Naive thymus-derived CD8-positive, alpha-beta T cell (primary cell): ENCODE measurements at regions of chr19 and their contacts with region 1.

Region 1: DNA sequence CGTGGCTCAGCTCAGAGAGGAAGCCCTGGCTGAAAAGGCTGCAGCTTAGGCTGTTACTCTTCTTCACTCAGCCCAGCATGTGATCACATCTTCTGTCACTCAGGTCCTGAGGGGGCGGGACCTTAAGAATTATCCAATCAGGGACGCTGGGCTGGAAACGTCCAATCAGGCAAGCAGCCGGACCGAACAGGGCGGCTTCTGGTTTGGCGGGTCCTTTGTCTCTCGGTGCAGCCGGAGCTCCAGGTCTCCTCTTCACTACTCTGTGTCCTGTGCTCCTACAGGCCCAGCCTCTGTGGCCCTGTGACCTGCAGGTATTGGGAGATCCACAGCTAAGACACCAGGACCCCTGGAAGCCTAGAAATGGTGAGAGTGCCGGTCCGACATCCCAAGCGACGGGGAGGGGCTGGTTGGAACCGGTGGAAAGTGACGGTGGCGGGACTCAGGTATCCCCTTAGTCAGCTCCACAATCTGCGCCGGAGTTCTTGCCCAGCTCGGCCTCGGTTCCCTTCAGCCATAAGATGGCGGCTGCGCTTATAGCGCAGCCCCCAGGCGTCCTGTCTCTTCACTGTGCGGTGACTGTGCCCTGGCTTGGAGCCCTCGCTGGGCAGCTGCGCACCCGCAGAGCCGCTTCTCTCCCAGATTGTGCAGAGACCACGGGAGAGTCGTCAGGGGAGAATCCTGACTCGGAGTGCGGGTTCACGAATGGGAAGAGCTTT is at the start of gene ZNF93:
- DNase-seq: peak; percentile 68 to 96 (median 91)
- ATAC-seq: peak; percentile 95 to 97
- H3K4me3 Mint-ChIP-seq: peak within 1 kb of the TSS; percentile 92 to 100 (median 96)
- H3K27ac Mint-ChIP-seq: peak within 1 kb of the TSS; percentile 80 to 98 (median 95)
- H3K4me1 Mint-ChIP-seq: peaks cover 20 to 39% (median 34%) of the 10 kb centered on the region in 4 donors
- H3K27me3 Mint-ChIP-seq: no peaks in the 10 kb centered on the region
- polyA plus RNA-seq, gene ZNF93: 7.7 to 11.5 (median 11.2) TPM

Region 2: GRCh38 chr19:19776041-19777008 is 124.6 kb before region 1 on chr19:
- POLR2A ChIA-PET with region 1: interaction called, 14 read pairs
- DNase-seq: peak; percentile 80 to 94 (median 91)
- ATAC-seq: peak; percentile 97 to 98
- H3K4me3 Mint-ChIP-seq: peak overlapping the region; percentile 94 to 100 (median 99)
- H3K27ac Mint-ChIP-seq: peak overlapping the region; percentile 95 to 99 (median 96)
- H3K4me1 Mint-ChIP-seq: peaks cover 21 to 65% (median 58%) of the 10 kb centered on the region in 4 donors
- H3K27me3 Mint-ChIP-seq: no peaks in the 10 kb centered on the region

Region 3: GRCh38 chr19:19849056-19849455 is 51.8 kb before region 1 on chr19:
- POLR2A ChIA-PET with region 1: no interaction called
- DNase-seq: no peak
- ATAC-seq: no peak
- H3K4me3 Mint-ChIP-seq: no peak overlapping the region
- H3K27ac Mint-ChIP-seq: no peak overlapping the region
- H3K4me1 Mint-ChIP-seq: no peaks in the 10 kb centered on the region
- H3K27me3 Mint-ChIP-seq: no peaks in the 10 kb centered on the region

Region 4: GRCh38 chr19:19860756-19861390 is 40.0 kb before region 1 on chr19:
- POLR2A ChIA-PET with region 1: interaction called, 39 read pairs
- DNase-seq: peak; percentile 30 to 90 (median 68)
- ATAC-seq: peak; percentile 63 to 65
- H3K4me3 Mint-ChIP-seq: peak overlapping the region; percentile 69 to 87 (median 80)
- H3K27ac Mint-ChIP-seq: peak overlapping the region in 9 of 10 donors; percentile 4 to 87 (median 71)
- H3K4me1 Mint-ChIP-seq: peaks cover 0 to 20% (median 10%) of the 10 kb centered on the region in 4 donors
- H3K27me3 Mint-ChIP-seq: peaks cover 0 to 3% (median 0%) of the 10 kb centered on the region in 5 donors

Region 5: GRCh38 chr19:19911150-19911549 is 10.3 kb after region 1 on chr19:
- POLR2A ChIA-PET with region 1: no interaction called
- DNase-seq: no peak
- ATAC-seq: no peak
- H3K4me3 Mint-ChIP-seq: no peak overlapping the region
- H3K27ac Mint-ChIP-seq: no peak overlapping the region
- H3K4me1 Mint-ChIP-seq: peaks cover 1 to 8% (median 4%) of the 10 kb centered on the region in 4 donors
- H3K27me3 Mint-ChIP-seq: no peaks in the 10 kb centered on the region